ENCODE measurements at regions of chr7 and their contacts with region 1.

Region 1: DNA sequence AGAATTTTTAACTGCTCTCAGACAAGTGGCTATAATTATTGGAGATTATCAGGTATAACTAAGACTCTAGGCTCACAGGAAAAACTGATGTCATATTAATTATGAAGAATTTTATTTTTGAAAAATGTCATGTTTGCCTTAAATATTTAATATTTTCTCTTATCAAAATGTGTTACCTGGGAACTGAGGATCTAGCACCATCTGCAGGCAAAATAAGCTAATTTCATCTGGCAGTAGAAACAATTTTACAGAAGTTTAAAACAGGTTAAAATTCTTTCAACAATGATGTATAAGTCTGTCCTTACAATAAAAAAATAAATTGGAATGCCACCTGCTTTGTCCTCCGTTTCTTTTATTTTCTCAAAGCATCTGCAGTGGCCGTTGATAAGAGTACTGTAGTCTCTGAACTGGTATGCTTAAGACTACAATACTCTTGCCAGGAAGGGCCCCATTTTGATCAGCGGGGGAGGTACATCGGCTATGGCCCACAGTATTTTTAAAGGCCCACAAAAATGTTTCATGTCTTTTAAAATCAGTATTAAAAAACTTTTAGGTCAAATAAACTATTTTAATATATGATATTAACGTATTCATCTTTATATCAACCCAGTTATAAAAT is 81.3 kb downstream of the VWDE start:
- DNase-seq: no peak
- ATAC-seq: no peak

Region 2: GRCh38 chr7:11427686-11428273 is 894.6 kb before region 1 on chr7:
- intact Hi-C with region 1: loop called (anchors 5 kb)
- DNase-seq: no peak
- ATAC-seq: no peak

Region 3: DNA sequence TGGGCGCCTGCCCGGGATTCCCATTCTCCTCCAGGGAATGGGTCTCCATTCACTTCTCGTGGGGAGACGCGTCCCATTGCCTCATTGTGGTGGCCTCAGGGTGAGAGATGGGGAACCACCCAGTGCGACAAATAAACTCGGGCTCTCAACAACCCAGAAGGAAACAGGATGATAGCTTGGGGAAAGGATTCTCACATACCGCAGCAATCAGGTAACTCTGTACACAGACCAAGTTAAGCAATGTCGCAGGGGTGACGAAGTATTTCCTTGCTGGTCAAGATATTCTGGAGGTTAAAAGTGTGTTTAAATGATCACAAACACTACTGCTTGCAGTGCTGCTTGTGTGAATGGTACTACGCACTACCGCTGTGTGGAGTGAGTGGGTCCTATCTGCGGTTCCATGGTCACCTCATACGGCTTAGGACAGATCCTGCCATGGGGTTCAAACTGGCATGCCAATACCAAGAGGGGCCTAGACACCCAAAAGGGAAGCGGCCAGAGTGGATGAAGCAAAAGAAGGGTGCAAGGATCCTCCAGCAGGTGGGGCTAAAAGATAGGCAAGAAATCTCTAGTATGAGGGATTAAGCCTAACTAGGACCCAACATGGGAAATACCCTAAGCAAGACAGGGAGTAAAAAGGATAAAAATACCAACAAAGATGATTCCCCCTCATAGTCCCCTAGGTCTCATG is 255.1 kb before region 1 on chr7:
- intact Hi-C with region 1: loop called (anchors 2 kb)
- DNase-seq: no peak
- ATAC-seq: peak; percentile 63